Right ventricle myocardium superior (tissue), 1 donor: ENCODE measurements at regions of chr4 and their contacts with region 1.

Region 1: GRCh38 chr4:42568610-42569207 is 88.2 kb downstream of the ATP8A1 start:
- DNase-seq: no peak
- ATAC-seq: peak; percentile 84

Region 2: GRCh38 chr4:42268824-42269223 is 299.9 kb before region 1 on chr4:
- intact Hi-C with region 1: no loop called
- DNase-seq: no peak
- ATAC-seq: no peak

Region 3: DNA sequence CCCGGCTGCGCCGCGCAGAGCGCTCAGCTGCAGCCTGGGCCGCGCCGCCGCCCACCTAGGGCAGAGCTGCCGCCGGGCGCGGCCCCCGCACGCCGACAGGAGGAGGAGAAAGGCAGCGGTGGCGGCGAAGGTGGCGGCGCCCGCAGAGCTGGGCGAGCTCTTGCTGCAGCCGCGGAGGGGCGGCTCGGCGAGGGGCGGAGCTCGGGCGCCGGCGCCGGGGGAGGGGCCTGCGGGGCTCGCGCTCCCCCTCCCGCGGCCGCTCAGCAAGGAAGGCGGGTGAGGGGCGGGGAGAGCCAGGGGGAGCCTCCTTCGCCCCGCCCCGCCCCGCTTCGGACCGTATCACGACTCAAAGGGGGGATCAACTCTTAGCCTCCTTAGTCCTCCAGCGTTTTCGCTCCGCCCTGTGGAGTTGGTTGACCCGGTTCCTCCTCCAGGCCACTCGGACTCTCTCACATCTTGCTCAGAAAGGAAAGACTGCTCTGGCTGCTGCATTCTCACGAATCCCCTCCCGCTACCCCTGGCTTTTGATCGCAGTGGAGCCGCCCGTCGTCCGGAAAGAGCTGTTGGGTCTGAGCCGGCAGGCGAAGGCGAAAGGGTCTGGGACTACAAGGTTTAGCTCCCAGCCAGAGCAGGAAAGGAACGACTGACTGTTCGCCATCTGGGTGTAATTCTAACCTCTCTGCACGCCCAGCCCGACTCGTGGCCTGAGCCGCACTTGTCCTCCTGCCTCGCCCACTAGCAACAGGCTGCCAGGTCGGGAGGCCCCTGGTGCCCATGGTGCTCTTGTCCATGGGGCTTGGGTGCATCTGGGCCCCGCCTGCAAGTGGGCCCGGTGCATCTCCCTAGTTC is 88.5 kb after region 1 on chr4 and contains the start of gene ATP8A1:
- intact Hi-C with region 1: loop called (anchors 10 kb)
- DNase-seq: peak; percentile 96
- ATAC-seq: peak; percentile 97
- total RNA-seq, gene ATP8A1: 19.3 TPM

Region 4: DNA sequence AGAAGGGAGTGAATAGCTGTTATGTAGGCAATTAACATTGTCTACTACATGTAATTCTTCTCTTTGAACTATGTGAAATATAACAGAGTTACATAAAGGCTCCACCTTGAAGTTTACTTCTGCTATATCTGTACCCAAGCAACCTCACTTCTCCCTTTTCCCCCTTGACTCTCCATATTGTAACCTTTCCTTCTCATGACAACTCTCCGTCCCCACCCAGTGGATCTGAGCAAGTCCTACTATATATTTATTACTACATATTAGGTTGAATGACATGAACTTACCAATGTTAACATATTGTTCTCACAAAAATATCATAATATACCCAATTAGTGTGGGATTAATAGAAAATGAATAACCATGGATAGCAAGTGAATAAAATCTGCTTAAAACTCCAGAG is 181.4 kb after region 1 on chr4:
- intact Hi-C with region 1: loop called (anchors 2 kb)
- DNase-seq: no peak
- ATAC-seq: peak; percentile 82

Region 5: GRCh38 chr4:42865572-42866189 is 297.0 kb after region 1 on chr4:
- intact Hi-C with region 1: loop called (anchors 5 kb)
- DNase-seq: no peak
- ATAC-seq: no peak